B cell (primary cell): ENCODE measurements at regions of chr6 and their contacts with region 1.

Region 1: GRCh38 chr6:136783495-136784270 is 8.6 kb downstream of the MAP3K5 start:
- DNase-seq: peak; percentile 82
- ATAC-seq: peak; percentile 96
- H3K4me3 ChIP-seq: peak overlapping the region; percentile 37 to 63 (median 58)
- H3K4me3 Mint-ChIP-seq: peak overlapping the region; percentile 98
- H3K27ac ChIP-seq: peak overlapping the region; percentile 57 to 80
- H3K27ac Mint-ChIP-seq: peak overlapping the region; percentile 98
- H3K4me1 ChIP-seq: peaks cover 59 to 61% of the 10 kb centered on the region in 2 donors
- H3K4me1 Mint-ChIP-seq: peaks cover 77% of the 10 kb centered on the region
- H3K27me3 ChIP-seq: no peaks in the 10 kb centered on the region
- H3K27me3 Mint-ChIP-seq: no peaks in the 10 kb centered on the region
- CTCF ChIP-seq: peak; percentile 42

Region 2: GRCh38 chr6:136761227-136761922 is 22.3 kb before region 1 on chr6:
- CTCF ChIA-PET with region 1: interaction called, 128 read pairs
- POLR2A ChIA-PET with region 1: interaction called, 14 read pairs
- intact Hi-C with region 1: no loop called
- DNase-seq: peak; percentile 21
- ATAC-seq: peak; percentile 22
- H3K4me3 ChIP-seq: peak overlapping the region; percentile 3 to 53 (median 19)
- H3K4me3 Mint-ChIP-seq: peak overlapping the region; percentile 74
- H3K27ac ChIP-seq: peak overlapping the region; percentile 84 to 91
- H3K27ac Mint-ChIP-seq: peak overlapping the region; percentile 85
- H3K4me1 ChIP-seq: peaks cover 61% of the 10 kb centered on the region in 2 donors
- H3K4me1 Mint-ChIP-seq: peaks cover 67% of the 10 kb centered on the region
- H3K27me3 ChIP-seq: no peaks in the 10 kb centered on the region
- H3K27me3 Mint-ChIP-seq: no peaks in the 10 kb centered on the region
- CTCF ChIP-seq: no peak

Region 3: GRCh38 chr6:136767570-136768307 is 15.9 kb before region 1 on chr6:
- CTCF ChIA-PET with region 1: interaction called, 128 read pairs
- POLR2A ChIA-PET with region 1: interaction called, 14 read pairs
- intact Hi-C with region 1: loop called (anchors 1 kb)
- DNase-seq: no peak
- ATAC-seq: no peak
- H3K4me3 ChIP-seq: peak overlapping the region in 2 of 5 experiments; percentile 2 to 11
- H3K4me3 Mint-ChIP-seq: peak overlapping the region; percentile 56
- H3K27ac ChIP-seq: peak overlapping the region; percentile 43 to 86
- H3K27ac Mint-ChIP-seq: peak overlapping the region; percentile 82
- H3K4me1 ChIP-seq: peaks cover 69 to 81% of the 10 kb centered on the region in 2 donors
- H3K4me1 Mint-ChIP-seq: peaks cover 77% of the 10 kb centered on the region
- H3K27me3 ChIP-seq: no peaks in the 10 kb centered on the region
- H3K27me3 Mint-ChIP-seq: no peaks in the 10 kb centered on the region
- CTCF ChIP-seq: no peak

Region 4: DNA sequence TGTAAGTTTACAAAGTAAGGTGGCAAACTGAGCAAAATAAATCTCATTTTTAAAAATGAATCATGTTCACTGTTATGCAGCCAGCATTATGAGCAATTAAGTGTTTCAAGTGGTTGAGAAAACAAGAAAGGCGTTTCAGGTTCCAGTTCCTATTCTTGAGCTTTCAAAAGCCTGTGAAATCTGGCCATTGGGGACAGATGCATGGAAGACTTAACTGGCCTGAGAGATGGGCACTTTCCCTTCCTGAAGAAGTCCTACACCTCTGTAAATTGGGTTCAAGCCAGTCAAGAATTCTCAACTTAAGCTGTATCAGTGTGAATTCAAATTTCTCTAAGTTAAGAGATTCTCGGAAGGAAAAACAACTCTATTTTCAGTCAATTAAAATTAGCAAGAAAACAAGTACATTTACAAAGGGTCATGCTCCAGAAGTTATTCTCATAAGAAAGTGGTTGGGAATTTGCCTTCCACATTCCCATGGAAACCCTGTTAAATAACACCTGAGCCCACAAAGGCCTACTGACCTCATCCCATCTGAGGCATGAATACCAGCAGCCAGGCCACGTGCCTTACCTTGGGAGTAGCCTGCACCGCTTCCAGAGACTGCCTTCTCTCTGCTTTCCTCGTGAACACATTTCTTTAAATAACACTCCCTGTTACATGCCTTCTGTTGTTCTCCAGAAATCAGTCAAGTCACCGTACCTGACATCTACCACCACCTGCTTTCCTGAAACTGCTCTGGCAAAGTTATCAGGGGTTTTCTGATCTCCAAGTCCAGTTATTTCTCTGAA is 10.8 kb before region 1 on chr6:
- CTCF ChIA-PET with region 1: interaction called, 11 read pairs
- POLR2A ChIA-PET with region 1: no interaction called
- intact Hi-C with region 1: no loop called
- DNase-seq: no peak
- ATAC-seq: peak; percentile 36
- H3K4me3 ChIP-seq: no peak overlapping the region
- H3K4me3 Mint-ChIP-seq: peak overlapping the region; percentile 65
- H3K27ac ChIP-seq: peak overlapping the region in 1 of 2 donors; percentile 36
- H3K27ac Mint-ChIP-seq: peak overlapping the region; percentile 82
- H3K4me1 ChIP-seq: peaks cover 43 to 46% of the 10 kb centered on the region in 2 donors
- H3K4me1 Mint-ChIP-seq: peaks cover 62% of the 10 kb centered on the region
- H3K27me3 ChIP-seq: no peaks in the 10 kb centered on the region
- H3K27me3 Mint-ChIP-seq: no peaks in the 10 kb centered on the region
- CTCF ChIP-seq: no peak

Region 5: DNA sequence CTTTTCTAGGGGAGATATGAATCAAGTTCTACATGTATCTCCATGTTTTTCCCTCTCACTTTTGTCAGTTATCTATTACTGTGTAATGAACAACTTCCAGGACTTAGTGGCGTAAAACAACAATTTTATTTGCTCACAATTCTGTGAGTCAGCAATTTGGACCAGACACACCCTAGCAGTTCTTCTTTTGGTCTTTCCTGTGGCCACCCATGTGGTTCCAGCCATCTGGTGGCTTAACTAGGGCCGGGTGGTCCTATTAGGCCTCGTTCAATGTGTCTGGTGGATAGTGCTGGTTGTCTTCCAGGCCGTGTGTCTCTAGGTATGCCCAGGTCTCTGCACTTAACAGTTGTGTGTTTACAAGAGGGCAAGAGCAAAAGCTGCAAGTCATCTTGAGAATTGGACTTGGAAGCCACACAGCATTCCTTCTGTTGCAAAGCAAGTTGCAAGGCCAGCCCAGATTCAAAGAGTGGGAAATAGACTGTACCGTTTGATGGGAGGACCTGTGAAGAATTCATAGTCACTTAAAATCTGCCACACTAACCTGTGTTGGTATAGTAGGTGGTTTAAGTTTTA is 117.6 kb after region 1 on chr6:
- CTCF ChIA-PET with region 1: no interaction called
- POLR2A ChIA-PET with region 1: no interaction called
- intact Hi-C with region 1: no loop called
- DNase-seq: no peak
- ATAC-seq: no peak
- H3K4me3 ChIP-seq: no peak overlapping the region
- H3K4me3 Mint-ChIP-seq: no peak overlapping the region
- H3K27ac ChIP-seq: no peak overlapping the region
- H3K27ac Mint-ChIP-seq: no peak overlapping the region
- H3K4me1 ChIP-seq: no peaks in the 10 kb centered on the region
- H3K4me1 Mint-ChIP-seq: no peaks in the 10 kb centered on the region
- H3K27me3 ChIP-seq: no peaks in the 10 kb centered on the region
- H3K27me3 Mint-ChIP-seq: no peaks in the 10 kb centered on the region
- CTCF ChIP-seq: no peak